ENCODE measurements at regions of chr3 and their contacts with region 1.

Region 1: GRCh38 chr3:105906836-105907235 is 38.0 kb upstream of the CBLB start:
- DNase-seq: peak; percentile 61
- ATAC-seq: peak; percentile 60
- H3K4me3 ChIP-seq: no peak overlapping the region
- H3K27ac ChIP-seq: peak overlapping the region; percentile 83
- H3K4me1 ChIP-seq: peaks cover 27% of the 10 kb centered on the region
- H3K27me3 ChIP-seq: no peaks in the 10 kb centered on the region
- CTCF ChIP-seq: no peak

Region 2: GRCh38 chr3:105744202-105744601 is 162.6 kb before region 1 on chr3:
- CTCF ChIA-PET with region 1: no interaction called
- POLR2A ChIA-PET with region 1: no interaction called
- intact Hi-C with region 1: no loop called
- DNase-seq: no peak
- ATAC-seq: no peak
- H3K4me3 ChIP-seq: no peak overlapping the region
- H3K27ac ChIP-seq: no peak overlapping the region
- H3K4me1 ChIP-seq: 0 out of 2 replicates have a peak, but pooled peaks cover 8% of the 10 kb centered on the region
- H3K27me3 ChIP-seq: no peaks in the 10 kb centered on the region
- CTCF ChIP-seq: no peak

Region 3: GRCh38 chr3:105927741-105928140 is 20.9 kb after region 1 on chr3:
- CTCF ChIA-PET with region 1: no interaction called
- POLR2A ChIA-PET with region 1: no interaction called
- intact Hi-C with region 1: no loop called
- DNase-seq: no peak
- ATAC-seq: no peak
- H3K4me3 ChIP-seq: no peak overlapping the region
- H3K27ac ChIP-seq: no peak overlapping the region
- H3K4me1 ChIP-seq: peaks cover 6% of the 10 kb centered on the region; the same call in 1 of the 2 replicates
- H3K27me3 ChIP-seq: no peaks in the 10 kb centered on the region
- CTCF ChIP-seq: no peak

Region 4: DNA sequence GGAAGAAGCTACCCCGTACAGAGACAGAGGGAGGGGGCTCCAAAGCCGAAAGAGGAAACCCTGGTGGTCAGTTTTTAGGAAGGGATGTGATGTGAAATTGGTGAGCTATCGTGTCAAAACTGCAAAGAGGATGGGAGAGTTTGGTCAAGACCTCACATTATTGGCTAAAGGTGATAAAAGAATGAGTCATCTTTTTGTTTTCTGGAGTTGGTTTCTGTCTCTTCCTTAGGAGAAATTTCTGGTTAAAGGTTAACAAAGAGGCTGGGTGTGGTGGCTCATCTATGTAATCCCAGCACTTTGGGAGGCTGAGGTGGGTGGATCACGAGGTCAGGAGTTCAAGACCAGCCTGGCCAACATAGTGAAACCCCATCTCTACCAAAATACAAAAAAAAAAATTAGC is 179.8 kb after region 1 on chr3:
- CTCF ChIA-PET with region 1: no interaction called
- POLR2A ChIA-PET with region 1: no interaction called
- intact Hi-C with region 1: loop called (anchors 5 kb)
- DNase-seq: peak; percentile 65
- ATAC-seq: peak; percentile 50
- H3K4me3 ChIP-seq: no peak overlapping the region
- H3K27ac ChIP-seq: peak overlapping the region; percentile 79
- H3K4me1 ChIP-seq: peaks cover 19% of the 10 kb centered on the region
- H3K27me3 ChIP-seq: no peaks in the 10 kb centered on the region
- CTCF ChIP-seq: no peak

Region 5: DNA sequence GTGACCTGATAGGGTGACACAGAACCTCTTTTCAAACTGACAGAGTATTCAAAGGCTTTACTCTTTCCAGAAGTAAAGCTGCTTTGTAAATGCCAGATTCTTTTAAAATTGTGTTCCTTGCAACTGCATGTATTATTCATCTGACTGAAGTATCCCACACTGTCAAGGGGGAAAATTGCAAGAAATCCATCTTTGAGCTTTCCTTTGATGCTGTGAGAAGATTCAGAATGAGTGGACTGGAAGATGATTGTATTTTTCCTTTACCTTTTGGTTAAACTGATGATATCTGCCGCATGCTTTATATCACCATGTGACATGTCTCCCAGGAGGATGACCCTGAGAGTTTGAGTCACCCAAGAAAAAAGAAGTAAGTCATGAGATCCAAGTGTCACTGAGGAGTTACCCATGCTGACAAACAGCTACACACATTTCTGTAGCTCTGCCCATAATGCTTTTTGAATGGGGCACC is 212.8 kb after region 1 on chr3:
- CTCF ChIA-PET with region 1: no interaction called
- POLR2A ChIA-PET with region 1: no interaction called
- intact Hi-C with region 1: loop called (anchors 2 kb)
- DNase-seq: peak; percentile 34
- ATAC-seq: no peak
- H3K4me3 ChIP-seq: no peak overlapping the region
- H3K27ac ChIP-seq: peak overlapping the region; percentile 58
- H3K4me1 ChIP-seq: peaks cover 75% of the 10 kb centered on the region
- H3K27me3 ChIP-seq: no peaks in the 10 kb centered on the region
- CTCF ChIP-seq: no peak